HepG2 (cell line): ENCODE measurements at regions of chr18 and their contacts with region 1.

Region 1: DNA sequence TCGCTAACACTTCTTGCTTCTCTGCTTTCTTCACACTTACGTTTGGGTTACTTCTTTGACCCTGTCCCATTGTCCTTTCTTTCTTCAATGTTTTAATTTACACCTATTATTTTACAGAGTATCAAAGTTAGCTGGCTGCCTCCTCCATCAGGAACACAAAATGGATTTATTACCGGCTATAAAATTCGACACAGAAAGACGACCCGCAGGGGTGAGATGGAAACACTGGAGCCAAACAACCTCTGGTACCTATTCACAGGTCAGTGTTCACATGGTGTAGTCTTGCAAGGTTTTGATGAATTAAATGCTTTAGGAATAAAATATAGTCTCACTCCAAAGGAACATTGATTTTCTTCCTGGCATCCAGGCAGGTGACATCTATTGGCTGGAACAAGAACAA is 919.0 kb downstream of the MBD2 start:
- DNase-seq: no peak
- ATAC-seq: no peak
- H3K4me3 ChIP-seq: no peak overlapping the region
- H3K27ac ChIP-seq: no peak overlapping the region
- H3K4me1 ChIP-seq: no peaks in the 10 kb centered on the region
- H3K27me3 ChIP-seq: no peaks in the 10 kb centered on the region
- CTCF ChIP-seq: no peak
- EP300 ChIP-seq: no peak
- POLR2A ChIP-seq: no peak
- RAD21 ChIP-seq: no peak

Region 2: DNA sequence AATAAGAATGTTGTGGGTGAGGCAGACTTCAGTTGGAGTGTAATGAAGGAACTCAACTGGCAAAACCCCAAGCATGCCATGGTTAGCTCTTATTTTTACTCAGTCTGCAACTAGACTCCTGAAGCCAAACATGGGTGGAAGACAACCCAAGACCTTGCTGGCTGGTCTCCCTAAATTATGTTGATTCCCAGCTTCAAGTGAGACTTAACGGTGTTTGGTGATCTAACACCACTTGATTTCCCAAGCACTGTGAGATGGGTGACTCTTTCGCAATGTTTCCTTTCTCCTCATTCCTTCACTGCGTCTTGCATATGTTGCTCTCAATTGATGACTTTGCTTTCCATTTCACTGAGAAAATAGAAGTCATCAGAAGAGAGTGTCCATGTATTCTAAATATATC is 272.3 kb before region 1 on chr18:
- CTCF ChIA-PET with region 1: no interaction called
- POLR2A ChIA-PET with region 1: no interaction called
- in situ Hi-C with region 1: no loop called
- intact Hi-C with region 1: no loop called
- DNase-seq: no peak
- ATAC-seq: no peak
- H3K4me3 ChIP-seq: no peak overlapping the region
- H3K27ac ChIP-seq: no peak overlapping the region
- H3K4me1 ChIP-seq: no peaks in the 10 kb centered on the region
- H3K27me3 ChIP-seq: no peaks in the 10 kb centered on the region
- CTCF ChIP-seq: no peak
- EP300 ChIP-seq: no peak
- POLR2A ChIP-seq: no peak
- RAD21 ChIP-seq: no peak

Region 3: GRCh38 chr18:53417003-53417402 is 111.5 kb after region 1 on chr18:
- CTCF ChIA-PET with region 1: no interaction called
- POLR2A ChIA-PET with region 1: no interaction called
- in situ Hi-C with region 1: loop called (anchors 25 kb)
- intact Hi-C with region 1: no loop called
- DNase-seq: no peak
- ATAC-seq: no peak
- H3K4me3 ChIP-seq: no peak overlapping the region
- H3K27ac ChIP-seq: no peak overlapping the region
- H3K4me1 ChIP-seq: no peaks in the 10 kb centered on the region
- H3K27me3 ChIP-seq: no peaks in the 10 kb centered on the region
- CTCF ChIP-seq: no peak
- EP300 ChIP-seq: no peak
- POLR2A ChIP-seq: no peak
- RAD21 ChIP-seq: no peak

Region 4: DNA sequence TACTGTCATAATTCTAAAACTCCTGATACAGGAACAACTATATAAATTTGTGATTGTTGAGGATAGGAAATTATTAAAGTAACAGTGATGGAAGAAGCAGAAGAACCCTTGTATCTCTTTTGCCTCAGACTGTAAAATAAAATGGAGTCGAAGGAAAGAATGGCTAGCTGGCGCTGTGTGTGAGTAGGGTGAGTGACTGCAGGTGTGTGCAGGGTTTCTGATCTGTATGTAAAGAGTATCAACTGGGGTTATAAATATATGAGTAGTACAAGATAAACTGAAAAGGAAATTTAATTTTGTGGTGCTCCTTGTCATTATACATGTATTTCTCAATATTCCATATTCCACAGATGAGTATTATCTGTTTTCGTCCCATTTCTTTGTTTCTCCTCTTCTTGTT is 979.1 kb after region 1 on chr18:
- CTCF ChIA-PET with region 1: no interaction called
- POLR2A ChIA-PET with region 1: no interaction called
- in situ Hi-C with region 1: no loop called
- intact Hi-C with region 1: no loop called
- DNase-seq: no peak
- ATAC-seq: no peak
- H3K4me3 ChIP-seq: no peak overlapping the region
- H3K27ac ChIP-seq: no peak overlapping the region
- H3K4me1 ChIP-seq: peaks cover 11% of the 10 kb centered on the region
- H3K27me3 ChIP-seq: no peaks in the 10 kb centered on the region
- CTCF ChIP-seq: no peak
- EP300 ChIP-seq: no peak
- POLR2A ChIP-seq: no peak
- RAD21 ChIP-seq: no peak